MCF 10A (cell line): ENCODE measurements at regions of chr3 and their contacts with region 1.

Region 1: GRCh38 chr3:190155752-190156151 is 35.1 kb upstream of the P3H2 start:
- DNase-seq: peak; percentile 79
- H3K4me3 Mint-ChIP-seq: peak overlapping the region; percentile 10
- H3K27ac Mint-ChIP-seq: peak overlapping the region; percentile 89
- H3K4me1 Mint-ChIP-seq: peaks cover 18% of the 10 kb centered on the region
- H3K27me3 Mint-ChIP-seq: no peaks in the 10 kb centered on the region
- CTCF ChIP-seq: no peak

Region 2: GRCh38 chr3:190012314-190012782 is 143.4 kb before region 1 on chr3:
- CTCF ChIA-PET with region 1: no interaction called
- POLR2A ChIA-PET with region 1: interaction called, 10 read pairs
- intact Hi-C with region 1: no loop called
- DNase-seq: peak; percentile 61
- H3K4me3 Mint-ChIP-seq: peak overlapping the region; percentile 34
- H3K27ac Mint-ChIP-seq: peak overlapping the region; percentile 64
- H3K4me1 Mint-ChIP-seq: peaks cover 39% of the 10 kb centered on the region
- H3K27me3 Mint-ChIP-seq: no peaks in the 10 kb centered on the region
- CTCF ChIP-seq: no peak

Region 3: GRCh38 chr3:190131329-190131728 is 24.4 kb before region 1 on chr3:
- CTCF ChIA-PET with region 1: interaction called, 4 read pairs
- POLR2A ChIA-PET with region 1: interaction called, 14 read pairs
- intact Hi-C with region 1: no loop called
- DNase-seq: peak; percentile 93
- H3K4me3 Mint-ChIP-seq: no peak overlapping the region
- H3K27ac Mint-ChIP-seq: peak overlapping the region; percentile 85
- H3K4me1 Mint-ChIP-seq: peaks cover 7% of the 10 kb centered on the region
- H3K27me3 Mint-ChIP-seq: no peaks in the 10 kb centered on the region
- CTCF ChIP-seq: no peak

Region 4: GRCh38 chr3:190139365-190139764 is 16.4 kb before region 1 on chr3:
- CTCF ChIA-PET with region 1: no interaction called
- POLR2A ChIA-PET with region 1: interaction called, 19 read pairs
- intact Hi-C with region 1: no loop called
- DNase-seq: no peak
- H3K4me3 Mint-ChIP-seq: no peak overlapping the region
- H3K27ac Mint-ChIP-seq: no peak overlapping the region
- H3K4me1 Mint-ChIP-seq: peaks cover 5% of the 10 kb centered on the region
- H3K27me3 Mint-ChIP-seq: no peaks in the 10 kb centered on the region
- CTCF ChIP-seq: no peak

Region 5: GRCh38 chr3:190169877-190170276 is 14.1 kb after region 1 on chr3:
- CTCF ChIA-PET with region 1: interaction called, 3 read pairs
- POLR2A ChIA-PET with region 1: interaction called, 21 read pairs
- intact Hi-C with region 1: no loop called
- DNase-seq: no peak
- H3K4me3 Mint-ChIP-seq: peak overlapping the region; percentile 33
- H3K27ac Mint-ChIP-seq: peak overlapping the region; percentile 9
- H3K4me1 Mint-ChIP-seq: peaks cover 7% of the 10 kb centered on the region
- H3K27me3 Mint-ChIP-seq: no peaks in the 10 kb centered on the region
- CTCF ChIP-seq: no peak